Activated B cell treated with CpG ODN at 0.5 μM for 24 hours (primary cell): ENCODE measurements at regions of chr6 and their contacts with region 1.

Region 1: GRCh38 chr6:135488023-135488422 is 9.5 kb downstream of the AHI1 start:
- DNase-seq: no peak
- ATAC-seq: no peak
- H3K4me3 Mint-ChIP-seq: no peak overlapping the region
- H3K27ac Mint-ChIP-seq: no peak overlapping the region
- H3K4me1 Mint-ChIP-seq: no peaks in the 10 kb centered on the region
- H3K27me3 Mint-ChIP-seq: no peaks in the 10 kb centered on the region
- CTCF ChIP-seq: no peak

Region 2: DNA sequence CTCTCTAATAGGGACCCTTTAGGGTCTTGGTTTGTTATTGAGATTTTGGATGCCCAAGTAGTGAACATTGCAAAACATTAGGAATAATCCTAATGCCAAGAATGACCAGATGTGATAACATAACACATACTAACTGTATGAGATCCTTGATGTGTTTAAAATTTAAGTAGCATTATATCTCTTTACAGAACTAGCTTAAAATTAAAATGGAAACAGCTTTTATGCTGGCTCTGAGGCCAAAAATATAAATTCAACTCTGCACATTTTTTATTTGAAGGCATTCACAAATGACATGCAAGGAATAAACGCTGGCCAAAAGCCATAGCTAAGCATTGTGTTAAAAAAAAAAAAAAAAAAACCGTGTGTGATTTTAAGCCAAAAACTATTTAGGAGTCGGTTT is 1646.8 kb before region 1 on chr6:
- CTCF ChIA-PET with region 1: no interaction called
- POLR2A ChIA-PET with region 1: no interaction called
- intact Hi-C with region 1: no loop called
- DNase-seq: no peak
- ATAC-seq: no peak
- H3K4me3 Mint-ChIP-seq: no peak overlapping the region
- H3K27ac Mint-ChIP-seq: no peak overlapping the region
- H3K4me1 Mint-ChIP-seq: peaks cover 8% of the 10 kb centered on the region
- H3K27me3 Mint-ChIP-seq: peaks cover 23% of the 10 kb centered on the region
- CTCF ChIP-seq: no peak

Region 3: DNA sequence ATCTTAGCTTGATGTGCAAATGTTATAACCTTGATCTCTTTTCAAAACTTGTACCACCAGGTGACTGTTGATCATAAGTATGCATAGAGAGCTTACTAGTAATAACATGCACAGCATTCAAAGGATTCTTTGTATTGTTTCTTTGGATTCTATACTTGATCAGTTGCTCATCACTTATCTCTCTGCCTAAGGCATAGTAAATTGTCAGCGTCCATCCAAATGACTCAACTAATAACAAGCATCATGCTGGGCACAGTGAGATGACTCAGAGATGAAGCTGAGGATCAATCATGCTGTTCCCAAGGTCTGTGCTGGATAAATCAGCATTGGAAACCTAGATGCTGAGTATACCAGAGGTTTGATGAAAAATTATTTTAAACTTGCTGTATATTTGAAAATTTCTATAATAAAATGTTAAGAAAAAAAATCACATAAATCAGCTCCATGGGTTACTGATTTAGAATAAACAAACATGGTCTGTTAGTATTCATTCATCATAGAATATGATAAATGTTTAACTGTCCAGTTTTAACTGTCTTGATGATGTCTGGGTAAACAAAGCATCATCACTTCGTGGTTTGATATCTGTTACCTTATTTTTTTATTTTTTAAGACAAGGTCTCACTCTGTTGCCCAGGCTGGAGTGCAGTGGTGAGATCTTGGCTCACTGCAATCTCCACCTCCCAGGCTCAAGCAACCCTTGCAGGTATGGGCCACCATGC is 1124.5 kb before region 1 on chr6:
- CTCF ChIA-PET with region 1: no interaction called
- POLR2A ChIA-PET with region 1: no interaction called
- intact Hi-C with region 1: no loop called
- DNase-seq: no peak
- ATAC-seq: no peak
- H3K4me3 Mint-ChIP-seq: no peak overlapping the region
- H3K27ac Mint-ChIP-seq: no peak overlapping the region
- H3K4me1 Mint-ChIP-seq: no peaks in the 10 kb centered on the region
- H3K27me3 Mint-ChIP-seq: no peaks in the 10 kb centered on the region
- CTCF ChIP-seq: no peak

Region 4: DNA sequence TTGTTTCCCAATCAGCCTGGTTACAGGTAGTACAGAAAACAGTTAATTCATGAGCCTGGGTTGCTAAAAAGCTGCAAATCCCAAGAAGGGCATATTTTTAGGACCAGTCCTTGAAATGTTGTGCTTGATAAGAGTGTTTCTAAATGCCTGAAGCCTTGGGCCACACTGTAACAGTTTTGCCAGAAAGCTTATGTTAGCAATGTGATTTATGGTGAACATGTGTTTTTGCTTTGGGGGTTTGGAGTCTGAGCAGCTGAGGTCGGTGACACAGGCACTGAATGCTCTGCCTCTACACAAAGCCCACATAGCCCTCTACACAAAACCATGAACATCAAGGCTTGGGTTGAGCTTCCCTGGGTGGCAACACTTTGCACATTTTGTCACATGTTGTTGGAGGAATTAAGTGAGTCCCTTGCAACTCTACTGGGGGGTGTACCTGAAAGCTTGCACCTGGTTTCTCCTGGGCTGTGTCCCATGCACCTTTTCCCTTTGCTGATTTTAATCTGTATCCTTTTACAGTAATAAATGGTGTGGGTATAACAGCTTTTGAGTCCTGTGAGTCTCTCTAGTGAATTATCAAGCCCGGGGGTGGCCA is 12.6 kb before region 1 on chr6:
- CTCF ChIA-PET with region 1: no interaction called
- POLR2A ChIA-PET with region 1: no interaction called
- intact Hi-C with region 1: loop called (anchors 1 kb)
- DNase-seq: no peak
- ATAC-seq: no peak
- H3K4me3 Mint-ChIP-seq: no peak overlapping the region
- H3K27ac Mint-ChIP-seq: no peak overlapping the region
- H3K4me1 Mint-ChIP-seq: no peaks in the 10 kb centered on the region
- H3K27me3 Mint-ChIP-seq: no peaks in the 10 kb centered on the region
- CTCF ChIP-seq: no peak